Activated T-helper 2 cell treated with anti-CD3 and anti-CD28 coated beads, Interferon-gamma antibody, Interleukin-2, Interleukin-4, amounts not matched to agents 10 μg/mL and 5 μg/mL and 100 μg/mL, durations not matched to agents 14 hours and 24 hours and 36 hours (primary cell): ENCODE measurements at regions of chr3 and their contacts with region 1.

Region 1: DNA sequence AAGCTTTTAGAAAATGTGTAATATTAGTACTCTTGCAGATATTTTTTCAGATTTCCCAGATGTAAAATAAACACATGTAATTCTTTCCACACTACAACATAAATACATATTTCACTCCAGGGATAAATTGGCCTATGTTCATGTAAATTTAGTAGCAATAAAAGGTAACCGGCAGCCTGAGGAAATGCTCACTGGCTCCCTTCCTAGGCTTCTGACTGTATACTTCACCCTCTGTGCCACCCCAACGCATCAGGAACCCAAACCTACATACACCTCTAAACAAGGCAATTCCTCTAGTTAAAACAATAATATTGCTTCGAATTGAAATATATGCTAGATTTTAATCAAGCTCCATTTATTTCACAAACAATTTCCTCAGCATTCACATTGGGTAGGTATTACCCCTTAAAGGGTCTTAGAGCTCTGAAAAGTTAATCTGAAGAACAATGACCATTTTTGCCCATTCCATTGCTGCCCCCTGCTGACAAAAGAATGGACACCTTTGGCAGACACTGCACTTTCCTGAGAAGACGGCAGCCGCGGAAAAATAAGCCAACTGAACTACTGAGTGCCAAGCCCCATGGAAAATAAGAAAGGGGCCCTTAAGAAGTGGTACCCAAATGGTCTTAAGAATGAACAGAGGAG is 212.5 kb downstream of the OSBPL10 start:
- DNase-seq: peak; percentile 36
- H3K4me3 Mint-ChIP-seq: no peak overlapping the region
- H3K27ac Mint-ChIP-seq: peak overlapping the region; percentile 33
- H3K4me1 Mint-ChIP-seq: peaks cover 57% of the 10 kb centered on the region
- H3K27me3 Mint-ChIP-seq: no peaks in the 10 kb centered on the region

Region 2: GRCh38 chr3:30768703-30769685 is 999.6 kb before region 1 on chr3:
- intact Hi-C with region 1: loop called (anchors 5 kb)
- DNase-seq: peak; percentile 44
- H3K4me3 Mint-ChIP-seq: no peak overlapping the region
- H3K27ac Mint-ChIP-seq: no peak overlapping the region
- H3K4me1 Mint-ChIP-seq: peaks cover 5% of the 10 kb centered on the region
- H3K27me3 Mint-ChIP-seq: peaks cover 40% of the 10 kb centered on the region

Region 3: DNA sequence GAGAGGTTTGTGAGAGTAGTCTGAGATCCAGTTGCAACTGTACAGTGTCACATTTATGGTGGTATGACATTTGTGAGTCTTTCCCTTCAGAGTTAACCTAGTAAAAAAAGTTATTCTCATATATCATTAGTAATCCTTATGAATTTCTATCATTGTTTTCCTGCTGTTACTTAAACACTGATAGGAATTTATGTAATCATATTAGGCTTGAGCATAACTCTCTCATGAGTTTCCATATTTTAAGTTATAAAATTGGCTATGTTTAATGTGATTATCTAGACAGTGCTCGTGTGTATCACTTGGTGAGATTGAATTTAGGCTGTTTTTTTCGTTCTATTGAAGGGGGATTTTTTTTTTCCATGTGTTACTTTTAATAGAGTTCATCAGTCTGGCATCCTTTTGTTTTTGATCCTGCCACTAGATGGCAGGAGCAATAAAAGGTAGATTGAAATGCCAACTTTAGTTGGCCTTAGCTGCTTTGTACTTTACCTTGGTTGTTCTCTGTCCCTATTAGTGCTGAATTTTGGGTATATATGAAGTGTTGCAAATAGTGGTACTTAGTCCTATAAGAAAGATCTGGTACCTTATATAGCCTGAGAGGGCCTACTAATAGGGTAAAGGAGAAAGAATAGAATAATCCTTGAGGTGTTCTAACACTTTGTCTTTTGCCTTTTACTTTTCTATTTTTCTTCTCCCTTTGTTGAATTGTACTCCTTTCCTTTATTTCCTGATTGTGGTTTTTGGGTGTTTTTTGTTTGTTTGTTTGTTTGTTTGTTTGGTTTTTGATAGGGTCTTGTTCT is 217.9 kb before region 1 on chr3:
- intact Hi-C with region 1: loop called (anchors 5 kb)
- DNase-seq: no peak
- H3K4me3 Mint-ChIP-seq: no peak overlapping the region
- H3K27ac Mint-ChIP-seq: peak overlapping the region; percentile 11
- H3K4me1 Mint-ChIP-seq: peaks cover 66% of the 10 kb centered on the region
- H3K27me3 Mint-ChIP-seq: no peaks in the 10 kb centered on the region

Region 4: DNA sequence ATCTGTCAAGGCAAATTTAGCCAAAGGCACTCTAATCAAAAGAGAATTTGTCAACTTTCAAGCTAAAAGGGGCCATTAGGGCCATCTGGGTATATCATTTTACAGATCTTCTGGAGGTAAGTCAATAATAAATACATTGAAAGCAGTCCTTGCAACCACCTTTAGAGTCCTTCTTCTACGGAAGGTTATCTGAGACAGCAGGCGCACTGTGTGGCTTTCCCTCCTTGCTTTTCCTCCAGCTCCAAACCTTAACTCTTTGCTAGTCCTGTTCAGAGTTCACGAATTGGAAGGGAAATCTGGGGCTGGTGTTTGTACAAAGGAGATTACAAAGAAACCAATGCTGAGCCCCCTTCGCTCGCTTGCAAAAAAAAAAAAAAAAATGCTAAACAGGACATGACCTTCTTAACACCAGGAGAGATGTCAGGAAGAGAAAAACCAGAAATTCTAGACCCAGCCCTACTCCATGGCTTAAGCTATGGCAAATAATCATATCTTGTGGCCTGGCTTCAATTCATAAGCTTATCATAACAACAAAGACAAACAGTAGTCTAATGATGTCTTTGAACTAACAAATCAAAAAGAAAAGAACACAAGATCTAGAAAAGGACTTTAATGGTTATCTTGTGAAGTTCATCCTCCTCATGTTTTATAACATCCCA is 20.2 kb before region 1 on chr3:
- intact Hi-C with region 1: no loop called
- DNase-seq: no peak
- H3K4me3 Mint-ChIP-seq: no peak overlapping the region
- H3K27ac Mint-ChIP-seq: no peak overlapping the region
- H3K4me1 Mint-ChIP-seq: no peaks in the 10 kb centered on the region
- H3K27me3 Mint-ChIP-seq: no peaks in the 10 kb centered on the region

Region 5: DNA sequence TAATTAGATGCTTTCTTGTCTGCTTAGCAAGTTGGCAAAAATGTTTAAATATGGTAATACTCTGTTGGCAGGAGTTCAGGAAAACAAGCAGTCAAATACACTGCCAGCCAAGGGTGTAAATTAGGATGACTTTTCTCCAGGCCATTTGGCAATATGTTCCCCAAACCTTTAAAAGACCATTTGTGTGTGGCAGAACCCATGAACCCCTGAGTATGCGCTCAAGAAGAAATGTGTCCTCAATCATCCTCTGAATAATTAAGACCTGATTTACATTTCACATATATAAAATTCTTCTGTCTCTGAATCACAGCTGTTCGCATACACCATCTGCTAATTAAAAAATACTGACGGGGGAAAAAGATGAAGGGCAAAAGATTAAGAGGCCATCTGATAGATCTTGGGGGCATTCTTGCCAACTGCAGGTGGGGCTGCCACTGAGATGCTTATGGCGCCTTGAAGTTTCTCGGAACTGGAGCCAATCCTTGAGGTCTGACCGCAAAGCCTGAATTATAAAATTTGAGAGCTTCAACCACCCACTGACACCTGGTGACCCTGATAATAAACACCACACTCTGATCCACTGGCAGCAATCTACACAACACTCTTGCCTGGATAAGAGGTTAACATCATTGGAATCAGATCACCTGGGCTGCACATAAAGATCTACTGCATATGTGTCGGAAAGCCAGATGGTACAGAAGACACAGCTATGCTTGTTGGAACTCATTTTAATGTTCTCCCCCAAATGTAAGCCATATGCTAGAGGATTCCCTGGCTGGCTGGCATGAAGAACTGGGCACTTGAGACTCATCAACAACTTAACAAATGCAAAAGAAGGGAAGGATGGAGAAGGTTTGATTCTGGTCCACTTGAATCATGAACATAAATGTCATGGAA is 21.8 kb after region 1 on chr3:
- intact Hi-C with region 1: no loop called
- DNase-seq: no peak
- H3K4me3 Mint-ChIP-seq: no peak overlapping the region
- H3K27ac Mint-ChIP-seq: no peak overlapping the region
- H3K4me1 Mint-ChIP-seq: no peaks in the 10 kb centered on the region
- H3K27me3 Mint-ChIP-seq: peaks cover 4% of the 10 kb centered on the region

Region 6: GRCh38 chr3:31831598-31831997 is 63.0 kb after region 1 on chr3:
- intact Hi-C with region 1: no loop called
- DNase-seq: no peak
- H3K4me3 Mint-ChIP-seq: no peak overlapping the region
- H3K27ac Mint-ChIP-seq: no peak overlapping the region
- H3K4me1 Mint-ChIP-seq: peaks cover 4% of the 10 kb centered on the region
- H3K27me3 Mint-ChIP-seq: peaks cover 7% of the 10 kb centered on the region

Region 7: GRCh38 chr3:31925271-31925630 is 156.7 kb after region 1 on chr3:
- intact Hi-C with region 1: loop called (anchors 5 kb)
- DNase-seq: no peak
- H3K4me3 Mint-ChIP-seq: no peak overlapping the region
- H3K27ac Mint-ChIP-seq: peak overlapping the region; percentile 65
- H3K4me1 Mint-ChIP-seq: peaks cover 38% of the 10 kb centered on the region
- H3K27me3 Mint-ChIP-seq: no peaks in the 10 kb centered on the region

Region 8: GRCh38 chr3:32249184-32249782 is 480.7 kb after region 1 on chr3:
- intact Hi-C with region 1: no loop called
- DNase-seq: no peak
- H3K4me3 Mint-ChIP-seq: no peak overlapping the region
- H3K27ac Mint-ChIP-seq: no peak overlapping the region
- H3K4me1 Mint-ChIP-seq: peaks cover 27% of the 10 kb centered on the region
- H3K27me3 Mint-ChIP-seq: peaks cover 2% of the 10 kb centered on the region